Lower leg skin (tissue), 4 donors: ENCODE measurements at regions of chr3 and their contacts with region 1.

Region 1: GRCh38 chr3:36060950-36061349 is 319.4 kb upstream of the STAC start:
- DNase-seq: no peak
- H3K4me3 ChIP-seq: no peak overlapping the region
- CTCF ChIP-seq: no peak
- POLR2A ChIP-seq: no peak

Region 2: GRCh38 chr3:36032180-36033047 is 28.5 kb before region 1 on chr3:
- intact Hi-C with region 1: loop called (anchors 2 kb)
- DNase-seq: no peak
- H3K4me3 ChIP-seq: no peak overlapping the region
- CTCF ChIP-seq: no peak
- POLR2A ChIP-seq: no peak

Region 3: DNA sequence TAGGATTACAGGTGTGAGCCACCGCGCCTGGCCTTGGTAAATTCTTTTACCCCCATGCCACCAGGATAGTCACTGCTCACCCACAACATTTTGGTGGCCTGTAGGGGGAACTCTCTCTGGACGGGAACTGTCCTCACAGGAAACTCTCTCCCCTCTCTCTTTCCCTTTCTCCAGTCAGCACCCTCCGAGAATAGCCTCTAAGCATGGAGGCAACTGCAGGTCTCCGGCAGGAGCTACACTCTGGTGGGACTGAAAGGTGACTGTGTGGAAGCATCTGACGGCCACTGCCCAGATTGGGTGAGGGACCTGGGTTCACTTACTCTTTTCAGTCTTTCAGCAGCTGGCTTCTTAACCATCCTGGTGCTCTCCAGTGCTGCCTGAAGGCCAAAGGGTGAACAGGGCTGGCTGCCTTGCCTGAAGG is 862.6 kb after region 1 on chr3:
- intact Hi-C with region 1: no loop called
- DNase-seq: peak in 1 of 2 donors; percentile 46
- H3K4me3 ChIP-seq: no peak overlapping the region
- CTCF ChIP-seq: no peak
- POLR2A ChIP-seq: no peak